Right ventricle myocardium inferior (tissue), 1 donor: ENCODE measurements at regions of chr19 and their contacts with region 1.

Region 1: DNA sequence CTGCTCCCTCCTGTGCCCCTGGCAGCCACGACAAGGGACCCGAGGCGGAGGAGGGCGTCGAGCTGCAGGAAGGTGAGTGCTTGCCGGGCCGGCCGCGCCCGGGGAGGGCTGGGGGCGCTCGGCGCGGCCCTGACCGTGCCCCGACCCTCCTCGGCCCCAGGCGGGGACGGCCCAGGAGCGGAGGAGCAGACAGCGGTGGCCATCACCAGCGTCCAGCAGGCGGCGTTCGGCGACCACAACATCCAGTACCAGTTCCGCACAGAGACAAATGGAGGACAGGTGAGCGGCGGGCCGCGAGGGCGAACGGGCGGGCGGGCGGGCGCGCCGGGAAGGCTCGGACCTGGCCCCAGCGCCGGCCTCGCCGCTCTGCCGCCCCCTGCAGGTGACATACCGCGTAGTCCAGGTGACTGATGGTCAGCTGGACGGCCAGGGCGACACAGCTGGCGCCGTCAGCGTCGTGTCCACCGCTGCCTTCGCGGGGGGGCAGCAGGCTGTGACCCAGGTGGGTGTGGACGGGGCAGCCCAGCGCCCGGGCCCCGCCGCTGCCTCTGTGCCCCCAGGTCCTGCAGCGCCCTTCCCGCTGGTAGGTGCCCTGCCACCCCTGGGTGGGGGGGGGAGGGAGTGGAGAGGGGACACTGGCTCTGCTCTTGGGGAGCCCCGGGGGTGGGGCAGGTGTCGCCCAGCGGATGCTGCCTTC is 807 bp downstream of the USF2 start:
- DNase-seq: peak; percentile 94
- ATAC-seq: peak; percentile 61

Region 2: GRCh38 chr19:35044317-35045117 is 225.1 kb before region 1 on chr19:
- intact Hi-C with region 1: loop called (anchors 10 kb)
- DNase-seq: no peak
- ATAC-seq: no peak

Region 3: GRCh38 chr19:35066691-35067563 is 202.6 kb before region 1 on chr19:
- intact Hi-C with region 1: loop called (anchors 5 kb)
- DNase-seq: peak; percentile 92
- ATAC-seq: peak; percentile 83

Region 4: GRCh38 chr19:35140962-35141637 is 128.5 kb before region 1 on chr19:
- intact Hi-C with region 1: loop called (anchors 5 kb)
- DNase-seq: peak; percentile 97
- ATAC-seq: peak; percentile 71

Region 5: GRCh38 chr19:35195830-35196229 is 73.7 kb before region 1 on chr19:
- intact Hi-C with region 1: no loop called
- DNase-seq: no peak
- ATAC-seq: no peak

Region 6: DNA sequence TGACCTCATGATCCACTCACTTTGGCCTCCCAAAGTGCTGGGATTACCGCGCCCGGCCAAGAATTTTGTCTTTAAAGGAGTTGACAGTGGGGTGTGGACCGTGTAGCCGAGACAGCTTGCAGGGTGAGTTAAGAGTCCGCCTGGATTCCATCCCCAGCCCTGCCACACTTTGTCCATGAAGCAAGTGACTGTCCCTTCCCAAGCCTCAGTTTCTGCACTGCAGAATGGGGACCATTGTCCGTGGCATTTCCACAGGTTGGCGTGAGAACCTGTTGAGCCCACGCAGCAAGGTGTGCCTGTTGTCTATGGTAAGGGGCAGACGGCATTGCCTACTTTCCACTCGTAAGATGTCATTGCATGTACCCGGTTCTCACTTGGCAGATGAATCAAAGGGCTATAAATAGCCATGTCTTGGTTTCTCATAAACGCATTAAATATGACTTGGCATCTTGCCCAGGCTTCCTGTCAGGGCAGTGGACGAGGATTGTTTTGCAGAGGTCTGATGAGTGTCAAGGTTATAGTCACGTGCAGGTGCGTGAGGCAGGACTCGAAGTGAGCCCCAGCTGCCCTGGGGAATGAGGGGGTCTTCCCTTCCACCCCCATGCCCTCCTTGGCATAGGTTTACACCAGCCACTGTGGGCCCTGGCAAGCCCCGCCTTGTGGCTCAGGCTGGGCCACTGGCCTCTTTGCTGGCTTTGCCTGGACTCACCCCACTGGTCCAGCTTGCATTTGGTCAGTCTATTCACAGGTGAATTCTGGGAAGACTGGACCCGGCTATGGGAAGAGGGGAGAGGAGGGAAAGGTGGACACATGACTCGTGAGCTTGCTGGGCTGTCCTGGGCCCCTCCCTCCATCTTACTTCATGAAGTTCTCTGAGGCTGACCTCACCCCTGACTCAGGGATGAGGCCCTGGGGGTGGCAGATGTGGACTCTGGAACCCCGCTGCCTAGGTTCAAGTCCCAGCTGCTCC is 55.6 kb before region 1 on chr19:
- intact Hi-C with region 1: loop called (anchors 5 kb)
- DNase-seq: no peak
- ATAC-seq: peak; percentile 74

Region 7: GRCh38 chr19:35253316-35254286 is 16.0 kb before region 1 on chr19:
- intact Hi-C with region 1: no loop called
- DNase-seq: no peak
- ATAC-seq: no peak

Region 8: GRCh38 chr19:35295792-35296462 is 26.4 kb after region 1 on chr19:
- intact Hi-C with region 1: no loop called
- DNase-seq: peak; percentile 59
- ATAC-seq: no peak